PC-9 (cell line): ENCODE measurements at regions of chr20 and their contacts with region 1.

Region 1: DNA sequence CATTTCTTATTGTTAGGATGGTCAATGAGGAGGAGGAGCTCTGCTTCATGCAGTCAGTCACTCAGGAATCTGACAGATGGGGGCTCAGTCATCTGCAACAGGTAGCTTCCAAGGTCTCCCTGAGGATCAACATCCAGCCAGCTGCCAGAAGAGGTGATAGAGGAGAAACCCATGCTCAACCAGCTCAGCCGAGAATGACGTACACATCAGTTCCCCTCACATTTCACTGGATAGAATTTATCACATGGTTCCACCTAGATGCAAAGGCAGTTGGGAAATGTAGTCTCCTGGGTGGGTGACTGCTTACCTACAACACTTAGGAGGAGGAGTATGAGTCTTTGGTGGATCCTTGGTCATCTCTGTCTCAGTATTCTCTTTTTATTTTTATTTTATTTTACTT is 144.5 kb downstream of the CEBPB start:
- DNase-seq: peak; percentile 54 to 87
- H3K4me3 ChIP-seq: no peak overlapping the region
- H3K27ac ChIP-seq: peak overlapping the region; percentile 92
- H3K4me1 ChIP-seq: peaks cover 73% of the 10 kb centered on the region
- H3K27me3 ChIP-seq: no peaks in the 10 kb centered on the region
- CTCF ChIP-seq: no peak

Region 2: DNA sequence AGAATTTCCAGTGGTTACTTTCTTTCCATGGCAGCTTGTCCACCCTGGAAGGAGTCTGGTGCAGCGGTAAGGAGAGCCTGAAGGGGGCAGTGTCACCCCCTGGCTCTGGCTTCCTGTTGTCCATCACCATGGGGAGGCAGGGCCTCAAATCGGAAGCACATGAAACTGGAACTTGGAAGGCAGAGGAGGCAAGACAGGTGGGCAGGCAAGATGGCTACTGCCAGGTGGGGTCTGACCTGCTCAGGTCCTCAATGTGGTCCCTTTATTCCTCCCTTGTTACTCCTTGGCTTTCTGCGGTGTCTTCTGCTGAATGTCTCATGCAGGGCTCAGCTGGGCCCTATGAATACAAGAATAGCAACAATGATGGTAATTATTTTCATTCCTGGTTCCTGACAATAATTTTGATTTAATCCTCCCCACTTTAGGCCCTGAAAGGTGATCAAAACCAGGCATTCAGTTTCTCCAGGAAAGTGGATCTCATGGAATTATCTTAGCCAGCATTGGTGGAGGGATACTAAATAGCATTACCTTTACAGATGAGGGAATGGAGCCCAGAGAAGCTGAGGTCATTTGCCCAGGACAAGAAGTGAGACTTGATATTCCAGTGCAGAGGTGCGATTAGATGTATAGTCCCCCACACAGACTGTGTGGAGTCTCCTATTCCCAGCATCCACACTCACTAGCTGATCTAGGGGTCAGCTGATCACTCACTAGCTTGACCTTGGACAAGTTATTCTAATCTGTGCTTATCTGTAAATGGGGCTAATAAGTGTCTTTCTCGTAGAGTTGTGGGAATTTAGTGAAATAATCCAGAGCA is 369.9 kb before region 1 on chr20:
- CTCF ChIA-PET with region 1: interaction called, 10 read pairs
- POLR2A ChIA-PET with region 1: no interaction called
- intact Hi-C with region 1: no loop called
- DNase-seq: peak; percentile 52 to 54
- H3K4me3 ChIP-seq: no peak overlapping the region
- H3K27ac ChIP-seq: no peak overlapping the region
- H3K4me1 ChIP-seq: peaks cover 25% of the 10 kb centered on the region
- H3K27me3 ChIP-seq: no peaks in the 10 kb centered on the region
- CTCF ChIP-seq: peak; percentile 76

Region 3: DNA sequence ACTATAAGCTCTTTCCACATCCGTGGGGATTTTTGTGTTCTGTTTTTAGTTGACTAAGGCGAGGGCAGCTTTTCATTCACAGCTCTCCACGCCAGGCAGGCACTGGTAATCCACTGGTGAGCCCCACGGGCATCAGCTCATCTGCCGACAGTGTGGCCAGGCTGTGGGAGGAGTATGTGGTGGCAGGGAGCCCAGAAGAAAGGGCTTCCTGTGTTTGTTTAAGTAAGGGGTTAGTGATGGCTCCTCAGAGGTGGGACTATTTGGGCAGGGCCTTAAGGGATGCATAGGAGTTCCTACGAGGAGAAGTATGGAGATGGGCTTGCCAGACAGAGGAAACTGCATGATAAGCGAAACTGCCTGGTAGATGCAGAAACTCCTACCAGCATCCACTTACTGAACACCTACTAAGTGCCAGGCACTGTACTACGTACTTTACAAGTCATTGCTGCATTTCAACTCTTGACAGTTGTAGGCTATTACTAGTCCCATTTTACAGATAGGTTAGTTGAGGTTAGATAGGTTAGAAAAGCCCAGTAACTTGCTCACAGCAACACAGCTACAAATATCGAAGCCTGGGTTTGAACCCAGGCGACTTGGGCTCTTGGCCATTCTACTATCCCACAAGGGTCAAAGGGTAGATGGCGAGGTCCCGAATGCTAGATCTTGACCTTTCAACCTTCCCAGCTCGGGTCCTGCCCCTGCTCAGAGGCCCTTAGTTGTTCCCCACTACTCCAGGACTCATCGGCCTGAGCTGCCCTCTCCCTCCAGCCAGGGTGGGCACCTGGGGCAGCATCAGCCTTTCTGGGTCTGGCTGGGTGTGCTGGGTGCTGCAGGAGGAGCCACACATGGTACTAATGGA is 89.4 kb before region 1 on chr20:
- CTCF ChIA-PET with region 1: interaction called, 13 read pairs
- POLR2A ChIA-PET with region 1: no interaction called
- intact Hi-C with region 1: no loop called
- DNase-seq: peak in 1 of 2 experiments; percentile 64
- H3K4me3 ChIP-seq: peak overlapping the region; percentile 49; the same call in 1 of the 2 replicates
- H3K27ac ChIP-seq: peak overlapping the region; percentile 99
- H3K4me1 ChIP-seq: peaks cover 100% of the 10 kb centered on the region
- H3K27me3 ChIP-seq: no peaks in the 10 kb centered on the region
- CTCF ChIP-seq: no peak

Region 4: DNA sequence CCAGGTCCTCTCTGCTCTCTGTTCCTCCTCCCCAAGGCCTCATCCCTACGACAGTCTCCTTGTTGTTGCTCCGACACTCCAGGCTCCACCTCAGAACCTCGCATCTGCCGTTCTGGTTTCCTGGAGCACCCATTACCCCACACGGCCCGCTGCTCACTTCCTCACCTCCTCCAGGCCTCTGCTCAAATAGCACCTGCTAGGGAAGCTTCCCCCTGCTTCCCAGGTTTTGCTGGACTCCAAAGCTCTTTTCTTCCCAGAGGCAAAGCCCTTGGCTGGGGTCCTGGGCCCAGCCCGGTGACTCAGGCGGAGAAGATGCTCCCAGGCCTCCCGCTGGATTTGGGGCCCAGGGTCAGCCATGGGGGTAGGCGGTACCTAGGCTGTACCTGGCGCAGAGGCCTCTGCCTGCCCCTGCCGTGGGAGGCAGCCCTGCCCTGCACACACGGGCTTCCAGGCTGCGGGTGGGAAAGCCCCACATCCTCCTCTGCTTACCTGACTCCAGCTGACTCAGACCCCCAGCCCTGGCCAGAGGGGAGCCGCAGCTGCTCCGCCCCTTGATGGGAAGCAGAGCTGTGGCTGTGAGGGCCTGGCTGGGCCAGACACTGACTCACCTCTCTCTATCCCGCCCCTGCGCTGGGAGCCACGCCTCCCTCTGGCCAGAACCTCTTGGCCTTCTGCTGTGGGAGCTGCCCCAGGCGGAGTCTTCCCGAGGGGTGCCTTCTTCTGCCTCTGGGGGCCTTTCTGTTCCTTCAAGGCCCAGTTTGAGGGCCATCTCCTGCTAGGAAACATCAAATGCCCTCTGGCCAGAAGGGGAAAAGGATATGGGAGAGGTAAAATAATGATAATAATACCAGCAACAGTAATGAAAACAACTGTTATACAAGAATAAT is 14.0 kb before region 1 on chr20:
- CTCF ChIA-PET with region 1: interaction called, 3 read pairs
- POLR2A ChIA-PET with region 1: interaction called, 13 read pairs
- intact Hi-C with region 1: no loop called
- DNase-seq: peak; percentile 94 to 95
- H3K4me3 ChIP-seq: peak overlapping the region; percentile 67
- H3K27ac ChIP-seq: peak overlapping the region; percentile 95
- H3K4me1 ChIP-seq: peaks cover 41% of the 10 kb centered on the region
- H3K27me3 ChIP-seq: no peaks in the 10 kb centered on the region
- CTCF ChIP-seq: no peak

Region 5: GRCh38 chr20:50354721-50355592 is 19.9 kb after region 1 on chr20:
- CTCF ChIA-PET with region 1: interaction called, 3 read pairs
- POLR2A ChIA-PET with region 1: interaction called, 27 read pairs
- intact Hi-C with region 1: no loop called
- DNase-seq: peak; percentile 62 to 90
- H3K4me3 ChIP-seq: no peak overlapping the region
- H3K27ac ChIP-seq: peak overlapping the region; percentile 61
- H3K4me1 ChIP-seq: peaks cover 40% of the 10 kb centered on the region
- H3K27me3 ChIP-seq: no peaks in the 10 kb centered on the region
- CTCF ChIP-seq: no peak

Region 6: GRCh38 chr20:50372776-50373167 is 37.7 kb after region 1 on chr20:
- CTCF ChIA-PET with region 1: no interaction called
- POLR2A ChIA-PET with region 1: no interaction called
- intact Hi-C with region 1: loop called (anchors 5 kb)
- DNase-seq: peak; percentile 68 to 71
- H3K4me3 ChIP-seq: no peak overlapping the region
- H3K27ac ChIP-seq: peak overlapping the region; percentile 21
- H3K4me1 ChIP-seq: peaks cover 60% of the 10 kb centered on the region
- H3K27me3 ChIP-seq: no peaks in the 10 kb centered on the region
- CTCF ChIP-seq: no peak